Gastrocnemius medialis (tissue), 4 donors: ENCODE measurements at regions of chr6 and their contacts with region 1.

Region 1: GRCh38 chr6:110882271-110882613 is 7.7 kb downstream of the AMD1 start:
- DNase-seq: no peak
- ATAC-seq: no peak
- H3K4me3 ChIP-seq: no peak overlapping the region
- H3K27ac ChIP-seq: no peak overlapping the region
- H3K4me1 ChIP-seq: peaks cover 50 to 65% of the 10 kb centered on the region in 2 donors
- H3K27me3 ChIP-seq: no peaks in the 10 kb centered on the region
- CTCF ChIP-seq: no peak
- POLR2A ChIP-seq: no peak

Region 2: GRCh38 chr6:110809792-110810191 is 72.5 kb before region 1 on chr6:
- in situ Hi-C with region 1: loop called in 3 of 4 experiments (anchors 5 to 10 kb)
- intact Hi-C with region 1: no loop called
- DNase-seq: no peak
- ATAC-seq: no peak
- H3K4me3 ChIP-seq: no peak overlapping the region
- H3K27ac ChIP-seq: no peak overlapping the region
- H3K4me1 ChIP-seq: peaks cover 15 to 20% of the 10 kb centered on the region in 2 donors
- H3K27me3 ChIP-seq: no peaks in the 10 kb centered on the region
- CTCF ChIP-seq: no peak
- POLR2A ChIP-seq: no peak